Prostate gland (tissue), 2 donors: ENCODE measurements at regions of chr5 and their contacts with region 1.

Region 1: GRCh38 chr5:159209438-159210305 is at the start of gene RNF145:
- DNase-seq: peak; percentile 87
- H3K4me3 ChIP-seq: peak within 1 kb of the TSS; percentile 92
- H3K27ac ChIP-seq: peak within 1 kb of the TSS; percentile 94 to 96
- H3K4me1 ChIP-seq: peaks cover 11% of the 10 kb centered on the region
- H3K27me3 ChIP-seq: no peaks in the 10 kb centered on the region
- CTCF ChIP-seq: no peak
- POLR2A ChIP-seq: peak; percentile 75
- total RNA-seq, gene RNF145: 38.6 to 50.5 TPM

Region 2: DNA sequence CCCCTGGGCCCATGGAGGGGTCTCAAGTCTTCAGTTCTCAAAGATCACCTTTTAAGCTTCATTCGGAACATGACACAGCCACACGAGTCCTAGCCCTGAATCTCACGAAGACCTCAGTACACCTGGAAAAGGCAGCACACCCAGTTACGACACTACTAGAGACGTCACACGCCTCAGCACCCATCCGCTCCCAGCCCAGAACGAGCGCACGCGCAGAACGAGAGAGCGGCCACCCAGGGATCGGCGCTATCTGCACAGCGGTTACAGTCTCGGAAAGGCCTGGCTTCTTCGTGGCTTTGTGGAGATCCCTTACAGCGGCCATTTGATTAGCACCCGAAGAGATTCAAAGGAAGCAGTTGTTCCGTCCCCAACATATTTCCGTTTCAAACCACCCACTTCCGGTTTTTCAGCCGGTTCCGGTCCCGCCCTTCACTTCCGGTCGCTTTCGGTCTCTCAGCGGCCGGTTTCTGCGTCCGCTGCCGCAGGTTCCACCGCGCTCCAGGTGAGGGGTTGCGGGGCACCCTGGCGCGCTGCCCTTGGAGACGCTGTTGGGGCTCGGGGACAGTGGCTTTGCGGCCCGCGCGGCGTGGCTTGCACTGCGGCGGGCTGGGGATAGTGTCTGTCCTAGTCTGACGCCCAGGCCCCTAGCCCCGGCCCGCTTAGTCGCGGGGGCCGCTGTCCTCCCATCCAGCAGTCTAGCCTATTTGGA is 53.3 kb after region 1 on chr5 and contains the start of gene UBLCP1:
- intact Hi-C with region 1: loop called (anchors 5 kb)
- DNase-seq: peak; percentile 72
- H3K4me3 ChIP-seq: peak within 1 kb of the TSS; percentile 72 to 99
- H3K27ac ChIP-seq: peak within 1 kb of the TSS; percentile 89
- H3K4me1 ChIP-seq: no peaks in the 10 kb centered on the region
- H3K27me3 ChIP-seq: no peaks in the 10 kb centered on the region
- CTCF ChIP-seq: no peak
- POLR2A ChIP-seq: peak; percentile 23
- total RNA-seq, gene UBLCP1: 17.0 to 22.8 TPM

Region 3: DNA sequence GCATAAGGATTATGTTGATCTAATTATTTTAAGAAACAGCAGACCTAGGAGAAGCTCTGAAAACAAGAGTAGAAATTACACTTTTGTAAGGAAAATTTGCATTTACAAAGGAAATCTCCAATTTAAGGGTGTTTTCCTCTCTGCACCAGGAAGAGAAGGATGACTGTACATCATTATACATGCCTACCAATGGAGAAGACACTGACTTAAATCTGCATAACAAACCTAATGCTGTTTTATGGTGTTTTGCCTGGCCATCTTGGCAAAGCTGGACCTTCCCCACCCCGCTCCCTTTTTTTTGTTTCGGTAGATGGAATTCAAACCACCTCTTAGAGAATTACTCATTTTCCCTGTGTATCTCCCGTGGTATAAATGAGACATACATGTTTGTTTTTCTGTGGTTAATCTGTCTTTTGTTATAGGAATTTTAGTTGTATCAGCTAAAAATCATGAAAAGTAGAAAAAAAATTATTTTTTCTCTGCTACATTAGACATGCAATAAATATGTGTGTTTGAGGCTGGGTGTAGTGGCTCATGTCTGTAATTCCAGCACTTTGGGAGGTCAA is 91.8 kb after region 1 on chr5:
- intact Hi-C with region 1: no loop called
- DNase-seq: no peak
- H3K4me3 ChIP-seq: no peak overlapping the region
- H3K27ac ChIP-seq: no peak overlapping the region
- H3K4me1 ChIP-seq: no peaks in the 10 kb centered on the region
- H3K27me3 ChIP-seq: no peaks in the 10 kb centered on the region
- CTCF ChIP-seq: no peak
- POLR2A ChIP-seq: no peak